CD4-positive, alpha-beta memory T cell (primary cell): ENCODE measurements at regions of chr12 and their contacts with region 1.

Region 1: DNA sequence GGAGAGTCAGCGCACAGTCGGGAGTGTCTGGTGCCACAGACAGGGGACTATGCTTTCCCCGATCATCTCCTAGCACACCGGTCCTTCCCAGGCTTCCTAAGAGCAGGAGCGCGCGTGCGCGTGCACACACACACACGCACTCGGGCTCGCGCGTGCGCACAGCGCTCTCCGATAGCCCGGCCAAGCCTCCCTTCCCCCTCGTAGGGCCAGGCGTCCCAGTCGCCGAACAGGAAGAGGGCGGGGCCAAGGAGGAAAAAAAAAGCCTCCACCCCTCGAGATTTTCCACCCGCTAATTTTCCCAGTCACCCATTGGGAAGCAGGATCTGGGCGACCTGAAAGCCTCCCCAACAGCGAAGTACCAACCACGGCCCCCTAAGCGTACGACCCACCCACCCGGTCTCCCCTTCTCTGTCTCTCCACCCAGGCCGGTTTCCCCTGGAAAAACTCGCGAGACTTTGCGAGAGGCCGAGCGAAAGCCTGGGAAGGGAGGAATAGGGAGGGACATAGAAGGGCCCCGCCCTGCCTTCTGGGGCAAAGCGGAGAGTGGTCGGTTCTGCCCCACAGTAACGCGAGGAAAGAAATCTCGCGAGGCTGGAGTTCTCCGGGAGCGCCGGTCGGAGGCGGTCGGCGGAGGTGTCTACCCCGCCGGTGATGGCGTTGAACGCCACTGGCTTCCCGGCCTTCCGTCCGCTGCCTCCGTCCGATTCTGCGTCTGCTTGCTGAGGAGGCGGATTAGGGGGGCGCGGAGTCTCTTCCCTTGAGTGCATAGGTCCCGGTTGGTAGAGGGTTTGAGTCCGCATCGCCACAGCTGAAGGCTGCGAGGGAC is at the starts of genes FGFR1OP2 and INTS13:
- DNase-seq: peak; percentile 95 to 96 (median 96)
- H3K4me3 ChIP-seq: peak within 1 kb of the TSS; percentile 82 to 92
- H3K4me3 Mint-ChIP-seq: peak within 1 kb of the TSS; percentile 91 to 99 (median 98)
- H3K27ac ChIP-seq: peak within 1 kb of the TSS; percentile 89
- H3K27ac Mint-ChIP-seq: peak within 1 kb of the TSS; percentile 90 to 100 (median 99)
- H3K4me1 ChIP-seq: peaks cover 66% of the 10 kb centered on the region
- H3K4me1 Mint-ChIP-seq: peaks cover 44 to 85% (median 58%) of the 10 kb centered on the region in 4 donors
- H3K27me3 ChIP-seq: no peaks in the 10 kb centered on the region
- H3K27me3 Mint-ChIP-seq: no peaks in the 10 kb centered on the region
- total RNA-seq, gene FGFR1OP2: 92.2 to 94.2 TPM
- total RNA-seq, gene INTS13: 25.6 to 28.7 TPM

Region 2: DNA sequence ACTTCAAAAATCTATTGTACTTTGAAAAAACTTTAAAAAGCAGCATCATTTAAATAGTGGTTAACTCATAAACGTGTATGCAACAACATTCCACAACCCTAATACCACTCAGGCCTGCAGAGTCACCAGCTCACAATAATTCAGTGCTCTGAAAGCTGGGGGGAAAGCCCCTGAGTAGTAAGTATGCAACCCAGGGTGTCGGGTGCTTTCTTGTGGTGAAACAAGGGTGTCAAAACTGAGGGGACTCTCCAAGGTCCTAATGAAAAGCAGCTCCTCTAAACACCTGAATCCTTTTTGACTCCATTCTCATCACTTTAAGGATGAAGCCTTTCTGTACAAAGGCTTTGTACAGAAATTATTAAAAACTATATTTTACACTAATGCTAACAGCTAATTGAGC is 33.9 kb after region 1 on chr12:
- CTCF ChIA-PET with region 1: no interaction called
- POLR2A ChIA-PET with region 1: interaction called, 4 read pairs
- intact Hi-C with region 1: loop called (anchors 1 kb)
- DNase-seq: peak; percentile 58 to 89 (median 68)
- H3K4me3 ChIP-seq: no peak overlapping the region
- H3K4me3 Mint-ChIP-seq: peak overlapping the region in 5 of 8 donors; percentile 41 to 68 (median 58)
- H3K27ac ChIP-seq: peak overlapping the region; percentile 43
- H3K27ac Mint-ChIP-seq: peak overlapping the region; percentile 60 to 90 (median 74)
- H3K4me1 ChIP-seq: peaks cover 24% of the 10 kb centered on the region
- H3K4me1 Mint-ChIP-seq: peaks cover 16 to 28% (median 21%) of the 10 kb centered on the region in 4 donors
- H3K27me3 ChIP-seq: no peaks in the 10 kb centered on the region
- H3K27me3 Mint-ChIP-seq: no peaks in the 10 kb centered on the region

Region 3: DNA sequence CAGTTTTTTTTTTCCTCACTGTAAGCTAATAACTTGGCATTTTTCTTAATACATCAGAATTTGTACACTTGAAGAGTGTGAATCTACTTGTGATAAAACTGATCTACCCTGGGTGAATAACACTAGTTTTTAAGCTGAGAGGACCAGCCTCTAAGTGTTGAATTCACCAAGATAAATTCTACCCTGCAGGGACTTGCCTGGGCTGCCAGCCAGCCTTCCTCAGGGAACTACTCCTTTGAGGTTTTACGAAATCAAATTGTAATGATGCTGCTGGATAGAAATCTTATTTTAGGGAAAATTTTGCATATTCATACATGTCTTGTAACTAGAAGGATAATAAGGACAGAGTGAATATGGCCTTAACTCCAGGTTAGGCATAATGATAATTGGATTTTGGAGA is 86.2 kb after region 1 on chr12:
- CTCF ChIA-PET with region 1: no interaction called
- POLR2A ChIA-PET with region 1: interaction called, 27 read pairs
- intact Hi-C with region 1: no loop called
- DNase-seq: no peak
- H3K4me3 ChIP-seq: no peak overlapping the region
- H3K4me3 Mint-ChIP-seq: peak overlapping the region in 6 of 8 donors; percentile 57 to 100 (median 98)
- H3K27ac ChIP-seq: no peak overlapping the region
- H3K27ac Mint-ChIP-seq: peak overlapping the region in 2 of 7 donors; percentile 23 to 98
- H3K4me1 ChIP-seq: peaks cover 30% of the 10 kb centered on the region
- H3K4me1 Mint-ChIP-seq: peaks cover 31 to 51% (median 37%) of the 10 kb centered on the region in 4 donors
- H3K27me3 ChIP-seq: no peaks in the 10 kb centered on the region
- H3K27me3 Mint-ChIP-seq: peaks cover 0 to 2% of the 10 kb centered on the region in 2 donors

Region 4: GRCh38 chr12:27243804-27244683 is 306.0 kb after region 1 on chr12 and contains the start of gene STK38L:
- CTCF ChIA-PET with region 1: no interaction called
- POLR2A ChIA-PET with region 1: interaction called, 3 read pairs
- intact Hi-C with region 1: loop called (anchors 1 kb)
- DNase-seq: peak; percentile 95 to 97 (median 97)
- H3K4me3 ChIP-seq: peak within 1 kb of the TSS; percentile 85 to 87
- H3K4me3 Mint-ChIP-seq: peak within 1 kb of the TSS; percentile 97 to 99 (median 98)
- H3K27ac ChIP-seq: peak within 1 kb of the TSS; percentile 77
- H3K27ac Mint-ChIP-seq: peak within 1 kb of the TSS; percentile 93 to 99 (median 99)
- H3K4me1 ChIP-seq: peaks cover 27% of the 10 kb centered on the region
- H3K4me1 Mint-ChIP-seq: peaks cover 32 to 58% (median 47%) of the 10 kb centered on the region in 4 donors
- H3K27me3 ChIP-seq: no peaks in the 10 kb centered on the region
- H3K27me3 Mint-ChIP-seq: no peaks in the 10 kb centered on the region
- total RNA-seq, gene STK38L: 17.2 to 21.8 TPM

Region 5: DNA sequence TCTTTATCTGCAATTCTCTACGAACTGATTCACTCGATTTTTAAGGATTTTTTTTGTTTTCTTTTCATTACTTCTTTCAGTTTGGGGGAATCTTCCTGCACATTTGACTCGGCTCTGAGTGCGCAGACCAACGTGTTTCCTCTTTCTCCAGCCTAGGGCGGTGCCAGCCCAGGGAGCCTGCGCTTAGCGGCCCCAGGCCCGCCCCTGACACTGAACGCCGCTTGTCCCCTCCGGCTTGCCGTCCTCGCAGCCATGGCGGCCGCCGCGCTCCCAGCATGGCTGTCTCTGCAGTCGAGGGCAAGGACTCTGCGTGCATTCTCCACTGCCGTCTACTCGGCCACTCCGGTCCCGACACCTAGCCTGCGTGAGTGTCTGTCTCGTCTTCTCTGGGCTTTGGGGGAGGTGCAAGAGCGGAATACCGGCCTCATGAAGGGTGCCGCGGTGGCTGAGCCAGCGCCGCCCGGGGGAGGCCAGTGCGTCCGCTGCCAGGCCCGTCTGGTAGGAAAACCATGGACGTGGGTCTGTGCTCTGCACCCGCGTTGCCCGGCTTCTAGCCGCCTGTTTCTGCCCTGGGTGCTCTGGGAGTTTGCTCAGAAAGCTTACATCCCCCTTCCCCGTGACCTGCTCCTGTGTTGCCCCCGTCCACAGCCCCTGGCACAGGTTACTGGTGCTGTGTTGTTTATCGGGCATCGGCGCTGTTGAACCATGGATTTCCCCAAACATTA is 772.7 kb after region 1 on chr12 and contains the start of gene MRPS35:
- CTCF ChIA-PET with region 1: no interaction called
- POLR2A ChIA-PET with region 1: no interaction called
- intact Hi-C with region 1: loop called (anchors 2 kb)
- DNase-seq: peak; percentile 90 to 92 (median 91)
- H3K4me3 ChIP-seq: peak within 1 kb of the TSS; percentile 52 to 78
- H3K4me3 Mint-ChIP-seq: peak within 1 kb of the TSS; percentile 92 to 100 (median 98)
- H3K27ac ChIP-seq: peak within 1 kb of the TSS; percentile 70
- H3K27ac Mint-ChIP-seq: peak within 1 kb of the TSS; percentile 90 to 99 (median 97)
- H3K4me1 ChIP-seq: peaks cover 25% of the 10 kb centered on the region
- H3K4me1 Mint-ChIP-seq: peaks cover 15 to 44% (median 29%) of the 10 kb centered on the region in 4 donors
- H3K27me3 ChIP-seq: no peaks in the 10 kb centered on the region
- H3K27me3 Mint-ChIP-seq: no peaks in the 10 kb centered on the region
- total RNA-seq, gene MRPS35: 20.3 to 21.1 TPM